ENCODE measurements at regions of chr3 and their contacts with region 1.

Region 1: GRCh38 chr3:47380601-47381316 is at the start of gene PTPN23:
- DNase-seq: peak; percentile 97 to 99 (median 99)
- ATAC-seq: peak; percentile 84
- H3K4me3 ChIP-seq: peak within 1 kb of the TSS; percentile 97
- H3K4me3 Mint-ChIP-seq: peak within 1 kb of the TSS; percentile 95
- H3K27ac ChIP-seq: peak within 1 kb of the TSS; percentile 85 to 97
- H3K27ac Mint-ChIP-seq: peak within 1 kb of the TSS; percentile 91
- H3K4me1 ChIP-seq: peaks cover 28% of the 10 kb centered on the region
- H3K4me1 Mint-ChIP-seq: peaks cover 41% of the 10 kb centered on the region
- H3K27me3 ChIP-seq: no peaks in the 10 kb centered on the region
- H3K27me3 Mint-ChIP-seq: no peaks in the 10 kb centered on the region
- CTCF ChIP-seq: no peak
- total RNA-seq, gene PTPN23: 27.3 to 35.7 TPM

Region 2: DNA sequence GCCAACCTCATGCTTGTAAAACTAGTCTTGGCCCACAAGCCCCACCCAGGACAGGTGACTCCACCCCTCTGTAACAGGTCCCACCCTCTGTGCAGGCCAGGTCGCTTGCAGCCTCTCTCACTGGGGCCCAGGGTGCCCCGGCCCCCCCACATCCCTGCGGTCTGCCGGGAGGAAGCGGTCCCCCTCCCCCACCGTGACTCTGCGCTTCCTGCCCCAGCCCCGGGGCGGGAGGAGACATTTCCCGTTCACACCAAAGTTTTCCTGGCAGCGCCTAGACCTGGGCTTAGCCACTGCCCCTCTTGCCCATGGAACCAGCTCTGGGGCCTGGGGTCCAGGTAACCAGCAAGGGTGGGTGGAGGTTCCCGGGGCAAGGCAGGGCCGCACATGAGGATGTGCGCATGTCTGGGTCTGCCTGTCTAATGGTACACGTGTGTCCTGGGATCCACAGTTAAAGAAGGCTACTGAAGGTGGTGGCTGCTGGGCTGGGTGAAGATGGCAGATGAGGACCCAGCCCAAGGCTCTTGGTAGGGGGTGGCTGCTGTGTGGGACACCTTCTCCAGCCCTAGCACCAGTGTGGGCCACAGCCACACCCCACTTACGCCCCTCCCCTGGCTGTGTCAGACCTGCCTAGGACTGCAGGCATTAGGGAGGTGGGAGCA is 392.9 kb before region 1 on chr3:
- CTCF ChIA-PET with region 1: no interaction called
- POLR2A ChIA-PET with region 1: no interaction called
- intact Hi-C with region 1: loop called in 1 of 2 experiments (anchors 5 kb)
- DNase-seq: peak; percentile 79 to 96 (median 89)
- ATAC-seq: peak; percentile 98
- H3K4me3 ChIP-seq: peak overlapping the region; percentile 53
- H3K4me3 Mint-ChIP-seq: peak overlapping the region; percentile 87
- H3K27ac ChIP-seq: peak overlapping the region; percentile 59 to 64
- H3K27ac Mint-ChIP-seq: peak overlapping the region; percentile 93
- H3K4me1 ChIP-seq: peaks cover 86% of the 10 kb centered on the region
- H3K4me1 Mint-ChIP-seq: peaks cover 68% of the 10 kb centered on the region
- H3K27me3 ChIP-seq: no peaks in the 10 kb centered on the region
- H3K27me3 Mint-ChIP-seq: no peaks in the 10 kb centered on the region
- CTCF ChIP-seq: no peak

Region 3: DNA sequence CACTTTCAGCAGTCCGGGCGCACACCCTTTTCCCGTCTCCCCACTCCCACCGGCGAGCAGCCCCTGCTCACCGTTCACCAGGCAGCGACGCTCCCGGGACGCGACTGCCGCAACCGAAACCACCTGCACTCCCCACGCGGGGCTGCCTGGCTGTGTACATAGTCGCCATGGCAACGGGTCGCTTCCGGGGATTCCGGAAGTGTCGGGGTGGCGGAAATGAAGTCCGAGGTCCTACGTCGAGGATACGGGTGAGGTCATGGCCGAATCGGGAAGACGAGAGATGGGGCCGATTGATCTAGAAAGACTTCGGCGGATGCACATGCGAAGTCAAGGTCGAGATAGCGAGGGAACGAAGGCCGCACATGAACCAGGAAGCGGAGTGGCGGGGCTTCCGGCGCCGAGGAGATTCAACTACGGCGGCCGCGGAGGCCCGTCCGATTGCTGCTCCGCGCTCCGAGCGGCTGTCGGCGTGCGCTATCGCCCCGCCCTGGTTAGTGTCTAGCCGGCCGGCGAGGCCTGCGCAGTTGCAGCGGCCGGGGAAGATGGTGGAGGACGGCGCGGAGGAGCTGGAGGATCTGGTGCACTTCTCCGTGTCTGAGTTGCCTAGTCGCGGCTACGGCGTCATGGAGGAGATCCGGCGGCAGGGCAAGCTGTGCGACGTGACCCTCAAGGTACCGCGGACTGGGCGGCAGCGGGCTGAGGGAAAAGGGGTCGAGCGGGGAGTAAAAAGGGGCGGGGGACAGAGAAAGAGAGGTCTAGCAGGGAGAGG is 98.2 kb before region 1 on chr3 and contains the starts of genes KIF9 and KLHL18:
- CTCF ChIA-PET with region 1: no interaction called
- POLR2A ChIA-PET with region 1: interaction called, 3 read pairs
- intact Hi-C with region 1: loop called (anchors 2 kb)
- DNase-seq: peak; percentile 92 to 99 (median 95)
- ATAC-seq: peak; percentile 83
- H3K4me3 ChIP-seq: peak within 1 kb of the TSS; percentile 78
- H3K4me3 Mint-ChIP-seq: peak within 1 kb of the TSS; percentile 98
- H3K27ac ChIP-seq: peak within 1 kb of the TSS; percentile 95 to 98
- H3K27ac Mint-ChIP-seq: peak within 1 kb of the TSS; percentile 99
- H3K4me1 ChIP-seq: peaks cover 45% of the 10 kb centered on the region
- H3K4me1 Mint-ChIP-seq: peaks cover 42% of the 10 kb centered on the region
- H3K27me3 ChIP-seq: no peaks in the 10 kb centered on the region
- H3K27me3 Mint-ChIP-seq: no peaks in the 10 kb centered on the region
- CTCF ChIP-seq: no peak
- total RNA-seq, gene KIF9: 8.0 to 9.2 TPM
- total RNA-seq, gene KLHL18: 43.3 to 43.7 TPM

Region 4: DNA sequence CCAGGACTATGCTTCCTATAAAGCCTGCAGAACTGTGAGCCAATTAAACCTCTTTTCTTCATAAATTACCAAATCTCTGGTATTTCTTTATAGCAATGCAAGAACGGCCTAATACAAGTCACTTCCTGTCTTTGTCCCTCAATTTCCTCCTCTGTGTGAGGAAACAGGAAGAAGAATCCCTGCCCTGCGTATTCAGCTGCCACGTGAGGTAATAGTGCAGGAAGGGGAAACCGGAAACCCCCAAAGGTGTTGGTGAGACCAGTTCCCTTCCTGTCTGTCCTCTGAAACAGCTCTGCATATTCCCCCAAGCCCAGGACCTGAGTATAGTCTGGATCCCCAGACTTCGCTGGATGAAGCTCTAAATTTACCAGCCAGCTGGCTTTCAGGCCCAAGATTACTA is 18.1 kb before region 1 on chr3:
- CTCF ChIA-PET with region 1: no interaction called
- POLR2A ChIA-PET with region 1: interaction called, 10 read pairs
- intact Hi-C with region 1: no loop called
- DNase-seq: peak in 5 of 14 experiments; percentile 4 to 64 (median 49)
- ATAC-seq: peak; percentile 43
- H3K4me3 ChIP-seq: no peak overlapping the region
- H3K4me3 Mint-ChIP-seq: no peak overlapping the region
- H3K27ac ChIP-seq: peak overlapping the region in 1 of 2 donors; percentile 48
- H3K27ac Mint-ChIP-seq: peak overlapping the region; percentile 43
- H3K4me1 ChIP-seq: peaks cover 13% of the 10 kb centered on the region
- H3K4me1 Mint-ChIP-seq: peaks cover 12% of the 10 kb centered on the region
- H3K27me3 ChIP-seq: no peaks in the 10 kb centered on the region
- H3K27me3 Mint-ChIP-seq: no peaks in the 10 kb centered on the region
- CTCF ChIP-seq: no peak

Region 5: DNA sequence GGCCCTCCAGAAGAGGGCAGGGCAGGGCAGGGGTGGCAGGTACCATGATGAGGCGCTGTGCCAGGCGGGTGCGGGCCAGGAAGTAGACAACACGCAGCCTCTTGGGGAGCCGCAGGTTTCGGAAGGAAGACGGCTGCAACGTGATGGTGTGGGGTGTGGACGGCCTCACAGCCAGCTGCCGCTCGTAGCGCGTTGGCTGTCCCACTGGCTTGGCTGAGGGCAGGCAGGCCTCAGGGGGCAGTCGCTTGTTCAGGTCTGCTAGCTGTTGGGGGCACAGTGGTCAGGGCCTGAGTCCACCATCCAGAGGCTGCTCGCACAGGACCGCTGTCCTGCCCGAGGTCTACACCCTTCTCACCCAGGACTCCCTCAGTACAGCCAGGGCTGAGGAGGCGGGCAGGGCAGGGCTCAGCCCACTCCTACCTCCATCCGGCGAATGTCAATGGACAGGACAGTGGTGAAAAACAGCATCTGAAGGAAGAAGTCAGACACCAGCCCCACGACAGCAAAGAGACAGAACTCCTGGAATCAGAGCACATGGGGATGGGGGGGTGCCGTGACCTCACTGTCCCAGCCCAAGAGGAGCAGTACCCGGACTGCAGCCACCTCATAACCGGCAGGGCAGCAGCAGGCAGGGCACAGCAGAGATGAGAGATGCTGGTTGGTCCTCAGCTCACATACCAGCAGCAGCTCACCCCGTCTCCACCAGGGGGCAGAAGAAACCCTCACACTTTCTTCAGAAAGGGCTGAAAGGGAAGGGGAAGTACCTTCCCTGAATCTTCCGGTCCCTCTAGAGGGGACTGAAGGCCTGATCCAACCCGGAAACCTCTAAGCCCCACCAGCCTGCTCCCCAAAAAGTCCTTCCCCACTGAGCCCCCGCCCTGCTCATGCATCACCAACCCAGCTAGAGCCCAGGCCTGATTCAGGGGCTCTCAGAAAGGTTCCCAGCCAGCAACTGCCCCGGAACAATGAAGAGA is 40.0 kb after region 1 on chr3:
- CTCF ChIA-PET with region 1: interaction called, 20 read pairs
- POLR2A ChIA-PET with region 1: interaction called, 8 read pairs
- intact Hi-C with region 1: no loop called
- DNase-seq: peak; percentile 78 to 94 (median 86)
- ATAC-seq: peak; percentile 99
- H3K4me3 ChIP-seq: no peak overlapping the region
- H3K4me3 Mint-ChIP-seq: peak overlapping the region; percentile 57
- H3K27ac ChIP-seq: peak overlapping the region; percentile 62 to 82
- H3K27ac Mint-ChIP-seq: peak overlapping the region; percentile 94
- H3K4me1 ChIP-seq: peaks cover 17% of the 10 kb centered on the region
- H3K4me1 Mint-ChIP-seq: peaks cover 12% of the 10 kb centered on the region
- H3K27me3 ChIP-seq: no peaks in the 10 kb centered on the region
- H3K27me3 Mint-ChIP-seq: no peaks in the 10 kb centered on the region
- CTCF ChIP-seq: peak; percentile 84

Region 6: DNA sequence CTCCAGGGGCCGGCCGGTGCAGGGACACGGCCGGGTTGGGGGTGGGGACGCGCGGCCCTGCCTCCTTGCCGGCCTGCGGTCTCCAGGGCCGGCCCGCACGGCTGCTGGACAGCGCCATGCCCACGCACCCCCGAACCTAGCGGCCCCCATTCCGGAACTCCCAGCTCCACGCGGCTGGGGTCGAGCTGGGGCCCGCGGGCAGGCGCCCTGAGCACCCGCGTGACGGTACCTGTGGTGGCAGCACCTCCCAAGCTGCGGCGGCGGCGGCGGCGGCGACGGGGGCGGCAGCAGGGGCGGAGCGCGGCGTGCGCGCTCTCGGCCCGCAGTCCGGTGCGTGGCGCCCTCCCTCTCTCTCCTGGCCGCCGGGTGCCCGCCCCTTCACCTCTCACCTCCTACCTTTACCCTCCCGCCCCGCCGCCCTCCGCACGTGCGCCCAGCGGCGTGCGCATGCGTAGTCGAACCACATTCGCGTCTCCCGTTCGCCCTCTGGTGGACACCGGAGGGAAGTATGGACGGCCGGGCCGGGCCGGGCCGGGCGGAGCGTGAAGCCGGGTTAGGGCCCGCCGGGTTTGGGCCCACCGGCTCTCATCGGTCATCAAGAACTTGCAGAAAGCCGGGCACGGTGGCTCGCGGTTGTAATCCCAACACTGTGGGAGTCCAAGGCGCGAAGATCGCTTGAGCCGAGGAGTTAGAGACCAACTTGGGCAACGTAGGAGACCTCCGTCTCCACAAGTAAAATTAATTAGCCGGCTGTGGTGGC is 95.0 kb after region 1 on chr3 and contains the start of gene SCAP:
- CTCF ChIA-PET with region 1: interaction called, 4 read pairs
- POLR2A ChIA-PET with region 1: interaction called, 8 read pairs
- intact Hi-C with region 1: loop called in 1 of 2 experiments (anchors 2 kb)
- DNase-seq: peak; percentile 93 to 98 (median 96)
- ATAC-seq: peak; percentile 92
- H3K4me3 ChIP-seq: peak within 1 kb of the TSS; percentile 68
- H3K4me3 Mint-ChIP-seq: peak within 1 kb of the TSS; percentile 99
- H3K27ac ChIP-seq: peak within 1 kb of the TSS; percentile 73 to 74
- H3K27ac Mint-ChIP-seq: peak within 1 kb of the TSS; percentile 89
- H3K4me1 ChIP-seq: peaks cover 28% of the 10 kb centered on the region
- H3K4me1 Mint-ChIP-seq: peaks cover 44% of the 10 kb centered on the region
- H3K27me3 ChIP-seq: no peaks in the 10 kb centered on the region
- H3K27me3 Mint-ChIP-seq: no peaks in the 10 kb centered on the region
- CTCF ChIP-seq: peak; percentile 90
- total RNA-seq, gene SCAP: 58.3 to 60.3 TPM

Region 7: DNA sequence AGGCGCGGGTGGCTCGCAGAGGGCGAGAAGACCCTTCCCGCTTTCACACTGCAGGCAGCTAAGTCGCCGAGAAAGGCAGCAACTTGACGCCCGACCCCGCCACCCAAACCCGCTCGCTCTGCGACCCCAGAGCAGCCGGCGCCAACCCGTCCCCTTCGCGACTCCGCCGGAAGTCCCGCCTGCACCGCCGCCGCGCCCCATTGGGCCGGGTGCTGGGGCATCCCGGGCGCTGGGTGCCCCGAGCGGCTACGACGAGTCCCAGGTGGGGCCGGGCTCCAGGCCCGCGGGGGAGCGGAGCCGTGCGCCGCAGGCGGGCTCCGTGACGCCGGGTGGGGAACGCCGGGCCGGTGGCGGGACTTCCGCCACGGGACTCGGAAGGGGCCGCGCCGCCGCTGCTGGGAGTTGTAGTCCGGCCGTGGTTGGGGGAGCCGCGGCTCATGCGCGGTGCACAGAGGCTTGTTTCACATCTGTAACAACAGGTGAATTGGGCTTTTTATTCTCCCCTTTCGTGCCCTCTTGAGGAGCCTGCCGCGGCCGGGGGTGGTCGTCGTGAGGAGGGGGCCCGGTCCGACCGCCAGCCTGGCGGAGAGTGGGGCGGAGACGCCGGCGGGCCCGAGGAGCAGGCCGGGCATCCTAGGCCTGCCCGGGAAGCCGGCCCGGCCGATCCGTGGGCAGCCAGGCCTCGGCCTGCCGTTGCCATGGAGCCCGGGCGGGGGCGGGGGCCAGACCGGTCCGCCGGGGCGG is 422.1 kb after region 1 on chr3 and contains the start of gene DHX30:
- CTCF ChIA-PET with region 1: no interaction called
- POLR2A ChIA-PET with region 1: no interaction called
- intact Hi-C with region 1: loop called in 1 of 2 experiments (anchors 10 kb)
- DNase-seq: peak; percentile 63 to 94 (median 80)
- ATAC-seq: peak; percentile 90
- H3K4me3 ChIP-seq: peak within 1 kb of the TSS; percentile 98
- H3K4me3 Mint-ChIP-seq: peak within 1 kb of the TSS; percentile 97
- H3K27ac ChIP-seq: peak within 1 kb of the TSS; percentile 83 to 85
- H3K27ac Mint-ChIP-seq: peak within 1 kb of the TSS; percentile 96
- H3K4me1 ChIP-seq: peaks cover 26% of the 10 kb centered on the region
- H3K4me1 Mint-ChIP-seq: peaks cover 20% of the 10 kb centered on the region
- H3K27me3 ChIP-seq: no peaks in the 10 kb centered on the region
- H3K27me3 Mint-ChIP-seq: no peaks in the 10 kb centered on the region
- CTCF ChIP-seq: no peak
- total RNA-seq, gene DHX30: 75.1 to 75.6 TPM

Measured in CD4-positive, alpha-beta T cell (primary cell).